CD8-positive, alpha-beta T cell (primary cell): ENCODE measurements at regions of chr12 and their contacts with region 1.

Region 1: DNA sequence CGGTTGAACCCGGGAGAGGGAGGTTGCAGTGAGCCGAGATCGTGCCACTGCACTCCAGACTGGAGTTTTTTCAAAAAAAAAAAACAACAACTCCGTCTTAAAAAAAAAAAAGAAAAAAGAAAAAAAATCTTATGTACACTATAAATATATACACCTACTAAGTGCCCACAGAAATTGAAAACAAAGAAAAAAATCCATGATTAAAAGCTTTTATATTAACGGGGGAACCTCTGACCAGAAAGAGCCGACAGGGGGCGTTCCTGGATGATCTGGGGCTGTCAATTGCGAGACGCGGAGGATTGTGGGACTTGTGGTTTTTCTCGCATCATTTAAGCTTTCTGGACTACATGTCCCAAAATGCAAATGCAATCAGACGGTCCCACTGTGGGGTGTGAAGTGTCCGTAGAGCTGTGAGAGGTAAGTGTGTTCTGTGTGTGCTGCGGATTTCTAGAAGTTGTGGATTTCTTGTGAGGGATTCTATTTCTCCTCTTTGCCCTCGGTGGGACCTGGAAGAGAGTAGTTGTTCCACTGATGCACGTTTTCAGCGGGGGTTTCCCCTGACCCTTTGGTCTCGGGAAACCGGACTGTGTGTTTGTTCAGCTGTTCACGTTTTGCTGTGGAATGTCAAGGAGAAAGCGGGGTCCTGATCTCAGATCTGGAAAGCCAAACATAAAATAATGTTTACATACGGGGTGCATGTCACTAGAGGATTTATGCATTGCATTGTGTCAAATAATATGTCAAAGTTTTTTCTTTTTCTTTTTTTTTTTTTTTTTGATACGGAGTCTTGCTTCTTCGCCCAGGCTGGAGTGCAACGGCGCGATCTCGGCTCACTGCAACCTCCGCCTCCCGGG is at the start of gene SIRT4:
- DNase-seq: peak; percentile 76 to 97 (median 89)
- ATAC-seq: peak; percentile 99
- H3K4me3 ChIP-seq: peak within 1 kb of the TSS; percentile 76 to 89
- H3K4me3 Mint-ChIP-seq: peak within 1 kb of the TSS; percentile 86
- H3K27ac ChIP-seq: peak within 1 kb of the TSS; percentile 3 to 53
- H3K27ac Mint-ChIP-seq: peak within 1 kb of the TSS; percentile 69
- H3K4me1 ChIP-seq: no peaks in the 10 kb centered on the region
- H3K4me1 Mint-ChIP-seq: peaks cover 8% of the 10 kb centered on the region
- H3K27me3 ChIP-seq: no peaks in the 10 kb centered on the region
- H3K27me3 Mint-ChIP-seq: no peaks in the 10 kb centered on the region
- CTCF ChIP-seq: peak; percentile 89
- total RNA-seq, gene SIRT4: not detected

Region 2: GRCh38 chr12:120200364-120200800 is 101.8 kb before region 1 on chr12:
- CTCF ChIA-PET with region 1: interaction called, 5 read pairs
- POLR2A ChIA-PET with region 1: interaction called, 15 read pairs
- intact Hi-C with region 1: no loop called
- DNase-seq: no peak
- ATAC-seq: no peak
- H3K4me3 ChIP-seq: peak overlapping the region; percentile 89 to 91
- H3K4me3 Mint-ChIP-seq: peak overlapping the region; percentile 93
- H3K27ac ChIP-seq: peak overlapping the region; percentile 70 to 83
- H3K27ac Mint-ChIP-seq: peak overlapping the region; percentile 96
- H3K4me1 ChIP-seq: peaks cover 36% of the 10 kb centered on the region
- H3K4me1 Mint-ChIP-seq: peaks cover 32% of the 10 kb centered on the region
- H3K27me3 ChIP-seq: no peaks in the 10 kb centered on the region
- H3K27me3 Mint-ChIP-seq: no peaks in the 10 kb centered on the region
- CTCF ChIP-seq: no peak

Region 3: GRCh38 chr12:120327593-120327992 is 25.4 kb after region 1 on chr12 and contains the start of gene PLA2G1B:
- CTCF ChIA-PET with region 1: interaction called, 7 read pairs
- POLR2A ChIA-PET with region 1: interaction called, 9 read pairs
- intact Hi-C with region 1: loop called in 1 of 2 experiments (anchors 1 kb)
- DNase-seq: no peak
- ATAC-seq: no peak
- H3K4me3 ChIP-seq: no peak within 1 kb of the TSS
- H3K4me3 Mint-ChIP-seq: no peak within 1 kb of the TSS
- H3K27ac ChIP-seq: no peak within 1 kb of the TSS
- H3K27ac Mint-ChIP-seq: no peak within 1 kb of the TSS
- H3K4me1 ChIP-seq: no peaks in the 10 kb centered on the region
- H3K4me1 Mint-ChIP-seq: peaks cover 7% of the 10 kb centered on the region
- H3K27me3 ChIP-seq: no peaks in the 10 kb centered on the region
- H3K27me3 Mint-ChIP-seq: peaks cover 3% of the 10 kb centered on the region
- CTCF ChIP-seq: no peak
- total RNA-seq, gene PLA2G1B: not detected

Region 4: GRCh38 chr12:120342156-120342555 is 40.0 kb after region 1 on chr12:
- CTCF ChIA-PET with region 1: no interaction called
- POLR2A ChIA-PET with region 1: no interaction called
- intact Hi-C with region 1: no loop called
- DNase-seq: no peak
- ATAC-seq: no peak
- H3K4me3 ChIP-seq: no peak overlapping the region
- H3K4me3 Mint-ChIP-seq: no peak overlapping the region
- H3K27ac ChIP-seq: no peak overlapping the region
- H3K27ac Mint-ChIP-seq: no peak overlapping the region
- H3K4me1 ChIP-seq: no peaks in the 10 kb centered on the region
- H3K4me1 Mint-ChIP-seq: no peaks in the 10 kb centered on the region
- H3K27me3 ChIP-seq: no peaks in the 10 kb centered on the region
- H3K27me3 Mint-ChIP-seq: peaks cover 8% of the 10 kb centered on the region
- CTCF ChIP-seq: no peak